Activated CD8-positive, alpha-beta T cell treated with anti-CD3 and anti-CD28 coated beads, Interleukin-2, amount 10 ng/mL, durations not matched to agents 7 days and 5 days (primary cell): ENCODE measurements at regions of chr2 and their contacts with region 1.

Region 1: DNA sequence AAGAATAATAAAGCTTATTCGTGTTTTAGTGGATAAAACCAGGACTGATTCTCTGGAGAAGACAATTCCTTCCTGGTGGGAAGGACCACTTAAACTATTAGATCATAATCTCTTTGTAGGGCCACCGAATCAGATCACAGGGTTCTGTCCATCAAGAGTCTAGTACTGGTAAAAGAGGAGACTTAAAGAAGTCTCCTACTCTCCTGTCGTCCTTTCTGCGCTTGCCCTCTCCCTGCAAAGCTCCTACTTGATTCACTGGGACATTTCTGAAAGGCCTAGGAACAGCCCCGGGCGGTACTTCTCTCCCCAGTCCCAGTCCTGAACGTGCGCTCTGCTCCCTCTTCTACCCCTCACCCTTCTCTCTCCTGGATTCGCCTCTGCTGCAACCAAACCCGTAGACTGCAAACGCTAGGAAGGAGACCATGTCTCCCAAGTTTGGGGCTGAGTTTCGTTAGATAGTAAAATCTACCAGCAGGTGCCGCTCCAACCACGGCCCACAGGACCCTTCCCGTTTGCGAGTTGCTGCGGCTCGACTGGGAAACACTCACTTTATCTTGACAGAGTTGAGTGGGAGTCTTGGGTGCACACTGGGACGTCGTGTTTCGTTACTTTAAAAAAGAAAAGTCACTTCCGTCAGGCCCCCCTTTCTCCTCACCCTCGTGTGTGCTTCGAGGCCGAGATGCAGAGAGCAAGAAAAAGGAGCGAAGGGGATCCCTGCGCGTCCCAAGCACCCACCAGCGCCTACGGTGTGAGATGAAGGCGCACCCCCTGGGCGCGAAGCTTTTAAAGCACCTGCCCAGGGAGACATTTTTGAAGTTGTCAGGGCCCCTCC is 923 bp downstream of the FIGLA start:
- DNase-seq: peak; percentile 79
- ATAC-seq: peak; percentile 91
- H3K4me3 Mint-ChIP-seq: peak overlapping the region; percentile 65
- H3K27ac Mint-ChIP-seq: no peak overlapping the region
- H3K4me1 Mint-ChIP-seq: peaks cover 5% of the 10 kb centered on the region
- H3K27me3 Mint-ChIP-seq: peaks cover 50% of the 10 kb centered on the region

Region 2: GRCh38 chr2:70431716-70432347 is 357.7 kb before region 1 on chr2:
- CTCF ChIA-PET with region 1: no interaction called
- POLR2A ChIA-PET with region 1: no interaction called
- DNase-seq: no peak
- ATAC-seq: no peak
- H3K4me3 Mint-ChIP-seq: no peak overlapping the region
- H3K27ac Mint-ChIP-seq: no peak overlapping the region
- H3K4me1 Mint-ChIP-seq: no peaks in the 10 kb centered on the region
- H3K27me3 Mint-ChIP-seq: peaks cover 3% of the 10 kb centered on the region

Region 3: DNA sequence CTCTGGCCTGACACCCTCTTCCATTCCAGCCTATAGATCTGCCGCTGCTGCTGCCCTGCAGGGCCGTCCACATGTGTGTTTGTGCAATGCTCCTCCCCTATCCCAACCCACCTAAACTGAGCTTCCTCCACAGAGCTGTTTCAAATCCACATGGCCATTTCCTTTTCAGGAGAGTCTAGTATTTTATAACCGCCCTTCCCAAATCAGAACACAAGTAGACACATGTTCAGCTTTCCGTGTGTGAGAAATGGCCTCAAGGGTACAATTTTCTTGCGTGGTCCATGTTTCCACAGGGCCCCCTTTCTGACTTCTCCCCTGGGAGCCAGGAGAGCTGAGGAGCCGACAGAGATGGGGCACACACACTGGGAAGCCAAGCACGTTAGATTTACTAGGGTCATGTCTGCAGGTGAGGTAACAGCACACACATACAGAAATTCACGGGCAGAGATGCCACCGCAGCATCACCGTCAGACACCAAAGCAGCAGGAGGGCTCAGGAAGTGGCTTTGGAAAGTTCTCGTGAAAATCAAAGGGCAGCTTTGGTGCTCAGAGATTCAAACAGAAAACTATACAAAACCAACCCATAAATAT is 133.0 kb before region 1 on chr2:
- CTCF ChIA-PET with region 1: interaction called, 31 read pairs
- POLR2A ChIA-PET with region 1: no interaction called
- DNase-seq: peak; percentile 47
- ATAC-seq: peak; percentile 59
- H3K4me3 Mint-ChIP-seq: no peak overlapping the region
- H3K27ac Mint-ChIP-seq: no peak overlapping the region
- H3K4me1 Mint-ChIP-seq: peaks cover 22% of the 10 kb centered on the region
- H3K27me3 Mint-ChIP-seq: peaks cover 14% of the 10 kb centered on the region

Region 4: DNA sequence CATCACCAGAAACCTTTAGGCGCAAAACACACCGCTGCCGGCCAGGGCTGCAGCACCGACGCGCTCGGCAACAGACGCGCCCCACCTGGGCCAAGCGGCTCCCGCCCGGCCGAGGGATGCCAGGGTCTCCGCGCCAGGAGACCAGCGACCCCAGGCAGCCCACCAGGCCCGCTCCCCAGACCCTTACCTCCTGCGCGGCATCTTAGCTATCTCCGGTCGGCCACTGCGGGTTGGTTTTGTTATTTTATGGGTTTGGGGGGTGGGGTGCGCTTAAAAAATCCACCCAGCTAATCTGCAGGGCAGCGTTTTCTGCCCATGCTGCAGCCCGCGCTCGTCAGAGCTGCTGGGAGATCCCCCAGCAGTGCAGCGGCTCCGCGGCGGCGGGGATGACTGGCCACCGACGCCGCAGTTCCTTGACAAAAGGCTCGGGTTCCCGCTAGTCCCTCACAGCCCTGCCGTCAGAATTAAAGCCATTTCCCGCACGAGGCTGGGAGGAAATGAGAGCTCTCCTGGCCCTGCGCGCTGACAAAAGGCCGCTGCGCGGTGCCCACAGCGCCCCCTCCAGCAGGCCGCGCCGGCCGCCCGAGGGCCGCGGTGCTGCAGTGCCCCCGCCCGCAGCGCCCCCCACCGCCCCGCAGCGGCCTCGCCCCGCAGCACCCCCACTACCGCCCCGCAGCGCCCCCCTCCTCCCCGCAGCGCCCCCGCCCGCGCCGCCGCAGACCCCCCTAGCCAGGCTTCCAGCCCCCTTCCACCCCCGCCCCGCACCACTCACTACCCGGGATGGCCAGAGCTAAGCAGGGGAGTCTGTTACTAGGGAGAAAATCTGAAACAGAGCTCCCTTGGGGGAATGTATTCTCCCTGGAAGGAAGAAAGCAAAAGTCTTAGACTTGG is 21.6 kb before region 1 on chr2 and contains the start of gene ADD2:
- CTCF ChIA-PET with region 1: interaction called, 25 read pairs
- POLR2A ChIA-PET with region 1: no interaction called
- DNase-seq: peak; percentile 63
- ATAC-seq: peak; percentile 77
- H3K4me3 Mint-ChIP-seq: peak within 1 kb of the TSS; percentile 80
- H3K27ac Mint-ChIP-seq: peak within 1 kb of the TSS; percentile 73
- H3K4me1 Mint-ChIP-seq: peaks cover 12% of the 10 kb centered on the region
- H3K27me3 Mint-ChIP-seq: peaks cover 47% of the 10 kb centered on the region
- total RNA-seq, gene ADD2: 12.8 to 14.2 TPM

Region 5: GRCh38 chr2:70861777-70862625 is 72.5 kb after region 1 on chr2:
- CTCF ChIA-PET with region 1: interaction called, 15 read pairs
- POLR2A ChIA-PET with region 1: no interaction called
- DNase-seq: peak; percentile 78
- ATAC-seq: peak; percentile 90
- H3K4me3 Mint-ChIP-seq: no peak overlapping the region
- H3K27ac Mint-ChIP-seq: no peak overlapping the region
- H3K4me1 Mint-ChIP-seq: peaks cover 3% of the 10 kb centered on the region
- H3K27me3 Mint-ChIP-seq: peaks cover 52% of the 10 kb centered on the region

Region 6: GRCh38 chr2:70871398-70872211 is 82.1 kb after region 1 on chr2:
- CTCF ChIA-PET with region 1: interaction called, 31 read pairs
- POLR2A ChIA-PET with region 1: no interaction called
- DNase-seq: peak; percentile 87
- ATAC-seq: peak; percentile 95
- H3K4me3 Mint-ChIP-seq: no peak overlapping the region
- H3K27ac Mint-ChIP-seq: no peak overlapping the region
- H3K4me1 Mint-ChIP-seq: peaks cover 4% of the 10 kb centered on the region
- H3K27me3 Mint-ChIP-seq: peaks cover 24% of the 10 kb centered on the region